Activated B cell treated with CpG ODN at 0.5 μM for 24 hours (primary cell): ENCODE measurements at regions of chr9 and their contacts with region 1.

Region 1: GRCh38 chr9:136474974-136475865 is 7.6 kb downstream of the SEC16A start:
- DNase-seq: no peak
- ATAC-seq: no peak
- H3K4me3 Mint-ChIP-seq: no peak overlapping the region
- H3K27ac Mint-ChIP-seq: no peak overlapping the region
- H3K4me1 Mint-ChIP-seq: peaks cover 9% of the 10 kb centered on the region
- H3K27me3 Mint-ChIP-seq: no peaks in the 10 kb centered on the region
- CTCF ChIP-seq: no peak

Region 2: DNA sequence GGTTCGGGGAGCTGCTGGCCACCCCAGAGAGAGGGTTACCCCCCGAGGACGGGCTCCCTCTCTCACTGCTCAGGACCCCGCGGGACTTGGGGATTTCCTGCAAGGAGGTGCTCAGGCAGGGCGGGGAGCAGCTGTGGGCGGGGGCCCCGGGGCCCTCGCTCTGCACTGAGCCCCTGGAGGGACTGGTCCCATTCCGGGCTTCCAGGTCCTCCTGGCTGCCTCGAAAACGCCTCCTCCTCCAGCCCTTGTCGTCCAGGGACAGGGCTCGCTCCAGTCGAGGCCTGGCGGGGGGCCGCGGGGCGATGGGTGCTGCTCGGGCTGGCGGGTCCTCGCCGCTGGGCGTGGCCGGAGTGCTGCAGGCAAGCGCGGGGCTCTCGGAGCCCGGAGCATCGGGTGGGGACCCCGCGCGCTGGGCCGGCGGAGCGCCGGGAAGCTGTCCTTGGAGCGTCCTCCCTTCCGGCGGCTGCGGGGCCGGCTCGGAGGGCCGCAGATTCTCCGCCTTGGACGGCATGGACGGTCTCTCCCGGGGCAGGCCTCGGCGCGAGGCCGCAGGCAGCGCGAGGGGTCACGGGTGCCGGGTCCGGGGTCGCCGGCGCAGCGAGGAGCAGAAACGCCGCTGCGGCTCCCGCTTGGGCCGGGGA is 36.2 kb before region 1 on chr9:
- CTCF ChIA-PET with region 1: no interaction called
- POLR2A ChIA-PET with region 1: no interaction called
- intact Hi-C with region 1: no loop called
- DNase-seq: peak; percentile 69
- ATAC-seq: peak; percentile 77
- H3K4me3 Mint-ChIP-seq: peak overlapping the region; percentile 84
- H3K27ac Mint-ChIP-seq: no peak overlapping the region
- H3K4me1 Mint-ChIP-seq: peaks cover 26% of the 10 kb centered on the region
- H3K27me3 Mint-ChIP-seq: no peaks in the 10 kb centered on the region
- CTCF ChIP-seq: no peak

Region 3: DNA sequence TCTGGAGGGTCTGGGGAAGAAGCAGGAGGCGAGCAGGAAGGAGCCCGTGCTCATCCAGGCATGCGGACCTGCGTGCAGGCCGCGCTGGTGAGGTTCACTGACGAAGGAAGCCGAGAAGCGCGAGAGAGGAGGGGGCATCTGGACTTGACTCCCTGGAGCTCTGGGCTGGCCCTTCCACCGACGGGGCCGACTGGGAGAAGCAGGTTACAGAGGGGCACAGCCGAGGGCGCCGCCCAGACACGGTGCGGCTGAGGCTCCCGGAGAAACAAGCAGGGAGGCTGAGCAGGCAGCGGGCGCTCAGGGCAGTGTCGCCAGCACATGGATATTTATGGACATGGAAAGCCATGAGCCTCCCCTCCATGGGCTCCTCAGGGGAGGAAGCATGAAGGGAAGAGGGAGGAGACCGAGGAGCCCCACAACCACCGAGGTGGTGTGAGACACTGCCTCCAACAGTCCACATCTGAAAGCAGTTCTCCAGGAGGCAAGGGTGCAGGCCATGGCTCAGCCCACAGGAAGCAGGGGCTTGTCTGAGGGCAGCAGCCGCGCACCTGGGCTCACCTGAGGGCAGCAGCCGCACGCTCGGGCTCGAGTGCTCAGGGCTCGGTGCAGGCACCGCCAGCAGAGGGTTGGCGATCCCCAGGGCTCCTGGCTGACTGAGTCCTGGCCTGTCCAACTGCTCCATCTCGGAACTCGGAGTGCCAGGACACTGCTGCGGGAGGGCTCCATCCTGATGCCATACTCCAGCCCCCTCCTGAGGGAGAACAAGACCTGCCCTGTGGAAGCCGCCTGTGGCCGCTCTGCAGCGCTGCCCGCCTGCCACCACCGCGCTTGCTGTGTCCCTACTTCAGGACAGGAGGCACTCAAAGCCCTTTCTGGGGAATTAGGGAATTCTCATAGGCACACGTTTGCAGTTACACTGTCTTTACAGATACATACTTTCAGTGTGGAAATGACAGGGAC is 19.9 kb before region 1 on chr9:
- CTCF ChIA-PET with region 1: no interaction called
- POLR2A ChIA-PET with region 1: interaction called, 14 read pairs
- intact Hi-C with region 1: no loop called
- DNase-seq: no peak
- ATAC-seq: no peak
- H3K4me3 Mint-ChIP-seq: no peak overlapping the region
- H3K27ac Mint-ChIP-seq: no peak overlapping the region
- H3K4me1 Mint-ChIP-seq: no peaks in the 10 kb centered on the region
- H3K27me3 Mint-ChIP-seq: no peaks in the 10 kb centered on the region
- CTCF ChIP-seq: no peak

Region 4: GRCh38 chr9:136525841-136526499 is 50.8 kb after region 1 on chr9:
- CTCF ChIA-PET with region 1: no interaction called
- POLR2A ChIA-PET with region 1: no interaction called
- intact Hi-C with region 1: no loop called
- DNase-seq: no peak
- ATAC-seq: no peak
- H3K4me3 Mint-ChIP-seq: no peak overlapping the region
- H3K27ac Mint-ChIP-seq: no peak overlapping the region
- H3K4me1 Mint-ChIP-seq: peaks cover 28% of the 10 kb centered on the region
- H3K27me3 Mint-ChIP-seq: no peaks in the 10 kb centered on the region
- CTCF ChIP-seq: no peak

Region 5: GRCh38 chr9:137492464-137493162 is 1017.4 kb after region 1 on chr9:
- CTCF ChIA-PET with region 1: no interaction called
- POLR2A ChIA-PET with region 1: no interaction called
- intact Hi-C with region 1: no loop called
- DNase-seq: no peak
- ATAC-seq: peak; percentile 58
- H3K4me3 Mint-ChIP-seq: no peak overlapping the region
- H3K27ac Mint-ChIP-seq: no peak overlapping the region
- H3K4me1 Mint-ChIP-seq: no peaks in the 10 kb centered on the region
- H3K27me3 Mint-ChIP-seq: no peaks in the 10 kb centered on the region
- CTCF ChIP-seq: no peak